Endothelial cell of umbilical vein (primary cell): ENCODE measurements at regions of chr11 and their contacts with region 1.

Region 1: GRCh38 chr11:68206187-68206601 is 6.9 kb downstream of the KMT5B start:
- DNase-seq: peak; percentile 70
- H3K4me3 ChIP-seq: no peak overlapping the region
- H3K27ac ChIP-seq: no peak overlapping the region
- H3K4me1 ChIP-seq: peaks cover 4% of the 10 kb centered on the region
- H3K27me3 ChIP-seq: no peaks in the 10 kb centered on the region
- CTCF ChIP-seq: peak; percentile 68 to 75
- POLR2A ChIP-seq: no peak

Region 2: GRCh38 chr11:68010090-68011041 is 195.8 kb before region 1 on chr11 and contains the start of gene ALDH3B1:
- CTCF ChIA-PET with region 1: interaction called, 12 read pairs
- POLR2A ChIA-PET with region 1: no interaction called
- dilution Hi-C with region 1: no loop called
- intact Hi-C with region 1: no loop called
- DNase-seq: peak; percentile 40
- H3K4me3 ChIP-seq: no peak within 1 kb of the TSS
- H3K27ac ChIP-seq: no peak within 1 kb of the TSS
- H3K4me1 ChIP-seq: peaks cover 11% of the 10 kb centered on the region
- H3K27me3 ChIP-seq: no peaks in the 10 kb centered on the region
- CTCF ChIP-seq: no peak
- POLR2A ChIP-seq: no peak
- total RNA-seq, gene ALDH3B1: 0.13 and 0.37 TPM in 2 replicates

Region 3: DNA sequence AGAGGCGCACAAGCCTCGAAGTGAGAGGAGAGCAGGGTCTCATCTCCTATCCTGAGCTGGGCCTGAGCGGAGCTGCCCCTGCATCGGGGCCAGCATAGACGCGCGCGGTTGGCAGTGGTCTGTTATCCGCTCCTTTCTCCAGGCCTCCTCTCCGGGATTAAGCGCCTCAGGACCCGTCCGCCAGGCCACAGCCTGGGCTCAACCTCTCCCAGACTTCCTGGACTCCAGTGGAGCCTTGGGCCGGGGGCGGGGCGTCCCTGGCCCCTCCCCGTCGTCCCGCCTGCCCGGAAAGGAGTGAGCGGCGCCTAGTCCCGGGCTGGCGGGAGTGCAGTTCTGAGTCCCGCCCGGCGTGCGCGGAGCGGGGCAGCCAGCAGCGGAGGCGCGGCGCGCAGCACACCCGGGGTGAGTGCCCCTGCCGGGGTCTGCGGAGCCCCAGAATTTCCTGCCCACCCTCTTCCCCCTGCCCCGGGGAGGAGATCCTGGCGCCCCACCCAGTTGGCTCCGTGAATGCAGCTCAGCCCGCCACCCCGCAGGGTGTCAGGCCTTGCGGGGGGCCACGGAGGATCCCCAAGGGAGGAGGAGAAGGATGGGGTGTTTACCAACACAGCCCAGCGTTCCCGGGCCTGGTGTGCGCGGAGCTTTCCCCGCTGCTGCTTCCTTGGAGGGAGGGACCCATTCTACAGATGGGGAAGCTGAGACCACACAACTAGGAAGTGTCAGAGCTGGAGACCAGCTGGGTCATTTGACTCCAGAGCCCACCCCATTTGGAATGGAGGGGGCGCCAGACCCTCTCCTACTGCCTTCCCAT is 167.3 kb before region 1 on chr11 and contains the start of gene TCIRG1:
- CTCF ChIA-PET with region 1: interaction called, 3 read pairs
- POLR2A ChIA-PET with region 1: no interaction called
- dilution Hi-C with region 1: no loop called
- intact Hi-C with region 1: loop called (anchors 5 kb)
- DNase-seq: peak; percentile 88
- H3K4me3 ChIP-seq: peak within 1 kb of the TSS; percentile 47 to 58 (median 58)
- H3K27ac ChIP-seq: peak within 1 kb of the TSS; percentile 51
- H3K4me1 ChIP-seq: peaks cover 20% of the 10 kb centered on the region
- H3K27me3 ChIP-seq: no peaks in the 10 kb centered on the region
- CTCF ChIP-seq: no peak
- POLR2A ChIP-seq: peak; percentile 98
- total RNA-seq, gene TCIRG1: 124 and 134 TPM in 2 replicates

Region 4: GRCh38 chr11:68076371-68077042 is 129.7 kb before region 1 on chr11:
- CTCF ChIA-PET with region 1: interaction called, 5 read pairs
- POLR2A ChIA-PET with region 1: no interaction called
- dilution Hi-C with region 1: no loop called
- intact Hi-C with region 1: loop called (anchors 1 kb)
- DNase-seq: peak; percentile 23
- H3K4me3 ChIP-seq: no peak overlapping the region
- H3K27ac ChIP-seq: no peak overlapping the region
- H3K4me1 ChIP-seq: no peaks in the 10 kb centered on the region
- H3K27me3 ChIP-seq: no peaks in the 10 kb centered on the region
- CTCF ChIP-seq: peak in 1 of 2 donors; percentile 44
- POLR2A ChIP-seq: no peak

Region 5: DNA sequence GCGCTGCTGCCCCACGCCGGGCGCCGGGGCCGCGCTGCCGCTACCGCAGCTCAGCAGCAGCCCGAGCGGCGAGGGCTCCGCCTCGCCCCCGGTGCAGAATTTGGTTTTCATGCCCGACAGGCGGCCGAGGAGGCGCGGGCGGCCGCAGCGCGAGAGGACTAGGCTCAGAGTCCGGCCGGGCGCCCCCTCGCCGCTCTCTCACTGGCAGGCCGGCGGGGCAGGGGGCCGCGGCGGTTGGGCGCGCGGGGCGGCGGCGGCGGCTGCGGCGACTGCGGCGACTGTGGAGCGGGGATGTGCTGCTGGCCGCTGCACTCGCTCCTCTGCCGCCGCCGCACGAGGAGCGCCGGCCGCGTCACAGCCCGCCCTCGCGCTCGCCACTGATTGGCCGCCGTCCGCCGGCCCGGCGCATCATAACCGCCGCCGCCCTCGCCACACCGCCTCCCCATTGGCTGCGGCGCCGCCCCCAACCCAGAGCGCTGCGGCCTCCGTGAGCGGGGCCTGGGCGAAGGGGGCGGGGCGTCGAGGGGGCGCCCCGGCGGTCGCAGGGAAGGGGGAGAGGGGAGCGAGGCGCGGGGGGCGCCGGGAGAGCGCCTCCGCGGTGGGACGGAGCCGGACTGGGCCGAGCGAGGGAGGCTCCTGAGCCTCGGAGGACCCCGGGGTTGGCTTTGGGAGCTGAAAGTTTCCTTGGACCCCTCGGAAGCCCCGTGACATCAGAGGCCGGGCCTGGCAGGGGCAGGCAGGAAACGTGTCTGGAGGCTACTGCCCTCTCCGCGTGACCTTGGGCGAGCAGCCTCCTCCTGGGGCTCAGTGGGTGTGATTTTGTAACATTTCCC is 84.9 kb before region 1 on chr11 and contains the start of gene CHKA:
- CTCF ChIA-PET with region 1: interaction called, 4 read pairs
- POLR2A ChIA-PET with region 1: no interaction called
- dilution Hi-C with region 1: no loop called
- intact Hi-C with region 1: loop called (anchors 5 kb)
- DNase-seq: peak; percentile 93
- H3K4me3 ChIP-seq: peak within 1 kb of the TSS; percentile 27 to 73 (median 56)
- H3K27ac ChIP-seq: peak within 1 kb of the TSS; percentile 85
- H3K4me1 ChIP-seq: peaks cover 8% of the 10 kb centered on the region
- H3K27me3 ChIP-seq: no peaks in the 10 kb centered on the region
- CTCF ChIP-seq: no peak
- POLR2A ChIP-seq: peak; percentile 33
- total RNA-seq, gene CHKA: 21.3 and 25.1 TPM in 2 replicates

Region 6: DNA sequence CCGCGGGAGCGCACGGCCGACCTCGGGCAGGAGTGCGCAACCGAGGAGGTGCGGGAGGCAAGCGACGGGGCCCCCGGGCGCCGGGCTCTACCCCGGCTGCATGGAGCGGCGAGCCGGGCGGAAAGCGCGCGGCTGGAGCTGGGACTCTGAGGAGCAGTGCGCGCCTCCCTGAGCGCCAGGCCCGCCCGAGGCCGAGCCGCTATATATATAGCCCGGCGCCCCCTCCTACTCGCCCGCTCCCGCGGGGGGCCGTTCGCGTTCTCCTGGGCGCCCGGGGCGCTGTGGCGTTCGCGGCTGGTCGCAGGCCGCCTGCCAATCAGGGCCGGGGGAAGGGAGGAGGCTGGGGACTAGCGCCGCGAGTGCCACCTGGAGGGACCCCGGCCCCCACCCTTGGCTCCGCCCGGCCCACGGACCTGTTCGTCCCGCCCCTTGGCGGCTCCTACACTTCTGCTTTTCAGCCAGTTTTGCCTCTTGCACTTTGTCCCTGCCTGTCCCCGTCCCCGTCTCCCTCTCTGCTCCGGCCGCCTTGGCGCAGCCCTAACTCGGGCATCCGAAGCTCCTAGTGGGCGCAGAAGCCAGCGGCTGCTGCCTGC is 1569.1 kb after region 1 on chr11 and contains the start of gene FGF4:
- CTCF ChIA-PET with region 1: no interaction called
- POLR2A ChIA-PET with region 1: no interaction called
- dilution Hi-C with region 1: no loop called
- intact Hi-C with region 1: no loop called
- DNase-seq: no peak
- H3K4me3 ChIP-seq: no peak within 1 kb of the TSS
- H3K27ac ChIP-seq: no peak within 1 kb of the TSS
- H3K4me1 ChIP-seq: no peaks in the 10 kb centered on the region
- H3K27me3 ChIP-seq: peaks cover 44 to 53% of the 10 kb centered on the region in 2 experiments
- CTCF ChIP-seq: no peak
- POLR2A ChIP-seq: no peak
- total RNA-seq, gene FGF4: not detected in 2 replicates